H1 (cell line): ENCODE measurements at regions of chr10 and their contacts with region 1.

Region 1: GRCh38 chr10:118459726-118460193 is 117.6 kb upstream of the FAM204A start:
- DNase-seq: peak; percentile 25 to 69
- H3K4me3 ChIP-seq: no peak overlapping the region
- H3K27ac ChIP-seq: no peak overlapping the region
- H3K4me1 ChIP-seq: no peaks in the 10 kb centered on the region
- H3K27me3 ChIP-seq: no peaks in the 10 kb centered on the region
- CTCF ChIP-seq: peak; percentile 51 to 79 (median 78)
- EP300 ChIP-seq: no peak
- POLR2A ChIP-seq: no peak
- RAD21 ChIP-seq: peak; percentile 85 to 90

Region 2: GRCh38 chr10:117496616-117497028 is 963.1 kb before region 1 on chr10:
- CTCF ChIA-PET with region 1: interaction called, 14 read pairs
- POLR2A ChIA-PET with region 1: no interaction called
- DNase-seq: peak; percentile 63 to 93
- H3K4me3 ChIP-seq: no peak overlapping the region
- H3K27ac ChIP-seq: no peak overlapping the region
- H3K4me1 ChIP-seq: peaks cover 0 to 3% (median 1%) of the 10 kb centered on the region in 4 experiments; a peak in 2 of 7 replicates
- H3K27me3 ChIP-seq: peaks cover 0 to 6% (median under 1%) of the 10 kb centered on the region in 4 experiments; a peak in 2 of 7 replicates
- CTCF ChIP-seq: peak; percentile 90 to 95 (median 92)
- EP300 ChIP-seq: peak in 1 of 2 experiments; percentile 41; a peak in 1 of 3 replicates
- POLR2A ChIP-seq: no peak
- RAD21 ChIP-seq: peak; percentile 99

Region 3: GRCh38 chr10:118439824-118440223 is 19.9 kb before region 1 on chr10:
- CTCF ChIA-PET with region 1: interaction called, 24 read pairs
- POLR2A ChIA-PET with region 1: no interaction called
- DNase-seq: no peak
- H3K4me3 ChIP-seq: no peak overlapping the region
- H3K27ac ChIP-seq: no peak overlapping the region
- H3K4me1 ChIP-seq: no peaks in the 10 kb centered on the region
- H3K27me3 ChIP-seq: no peaks in the 10 kb centered on the region
- CTCF ChIP-seq: no peak
- EP300 ChIP-seq: no peak
- POLR2A ChIP-seq: no peak
- RAD21 ChIP-seq: no peak

Region 4: GRCh38 chr10:118447478-118448270 is 12.1 kb before region 1 on chr10:
- CTCF ChIA-PET with region 1: interaction called, 26 read pairs
- POLR2A ChIA-PET with region 1: no interaction called
- DNase-seq: no peak
- H3K4me3 ChIP-seq: no peak overlapping the region
- H3K27ac ChIP-seq: no peak overlapping the region
- H3K4me1 ChIP-seq: no peaks in the 10 kb centered on the region
- H3K27me3 ChIP-seq: no peaks in the 10 kb centered on the region; a peak in 1 of 7 replicates
- CTCF ChIP-seq: no peak
- EP300 ChIP-seq: no peak
- POLR2A ChIP-seq: no peak
- RAD21 ChIP-seq: no peak

Region 5: DNA sequence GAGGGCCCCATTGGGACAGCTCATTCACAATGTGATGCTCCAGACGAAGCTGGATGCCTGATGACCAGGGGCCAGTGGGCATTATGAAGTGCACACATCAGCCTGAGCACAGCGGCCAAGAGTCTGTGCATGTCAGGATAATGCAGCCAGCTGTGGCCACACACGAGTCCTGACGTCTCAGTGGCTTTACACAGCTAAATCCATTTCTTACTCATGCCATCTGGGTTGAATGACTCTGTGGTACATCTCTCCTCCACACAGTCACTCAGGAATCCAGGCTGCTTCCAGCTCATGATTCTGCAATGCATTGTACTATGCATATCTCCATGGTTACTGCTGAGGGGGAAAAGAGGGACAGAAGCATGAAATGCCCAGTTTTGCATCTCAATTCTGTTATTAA is 12.1 kb after region 1 on chr10:
- CTCF ChIA-PET with region 1: interaction called, 73 read pairs
- POLR2A ChIA-PET with region 1: no interaction called
- DNase-seq: no peak
- H3K4me3 ChIP-seq: no peak overlapping the region
- H3K27ac ChIP-seq: no peak overlapping the region
- H3K4me1 ChIP-seq: peaks cover 0 to 3% (median 0%) of the 10 kb centered on the region in 4 experiments; a peak in 1 of 7 replicates
- H3K27me3 ChIP-seq: no peaks in the 10 kb centered on the region
- CTCF ChIP-seq: no peak
- EP300 ChIP-seq: no peak
- POLR2A ChIP-seq: no peak
- RAD21 ChIP-seq: no peak

Region 6: DNA sequence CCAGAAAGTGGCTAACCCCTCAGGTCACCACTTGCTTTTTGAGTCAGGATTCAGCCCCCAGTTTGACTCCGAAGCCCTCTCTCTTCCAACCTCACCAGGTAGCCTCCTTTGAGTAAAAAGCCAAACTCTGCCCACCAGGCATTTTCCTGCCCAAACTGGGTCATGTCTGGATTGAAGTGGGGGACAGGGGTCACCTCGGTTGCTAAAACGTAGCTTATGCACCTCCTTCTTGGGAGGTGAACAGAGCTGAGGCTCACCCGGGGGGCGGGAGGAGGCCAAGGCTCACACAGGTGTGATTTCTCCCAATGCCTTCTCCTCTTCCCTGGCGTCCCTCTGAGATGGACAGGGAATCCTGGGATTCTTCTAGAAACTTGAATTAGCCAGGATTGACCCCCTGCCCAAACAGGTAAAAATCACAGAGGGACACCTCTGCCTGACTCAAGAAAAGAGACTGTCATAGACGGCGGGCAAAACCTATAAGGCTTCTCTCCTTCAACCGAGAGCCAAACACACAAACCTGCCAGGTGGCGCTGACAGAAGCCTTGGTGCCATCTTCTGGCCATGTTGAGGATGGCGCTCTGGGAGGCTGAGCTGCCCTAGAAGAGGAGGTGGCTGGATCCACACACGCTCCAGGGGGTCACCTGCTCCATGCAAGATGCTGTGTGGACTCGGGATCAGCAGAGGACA is 84.1 kb after region 1 on chr10:
- CTCF ChIA-PET with region 1: interaction called, 38 read pairs
- POLR2A ChIA-PET with region 1: no interaction called
- DNase-seq: peak in 1 of 2 experiments; percentile 82
- H3K4me3 ChIP-seq: no peak overlapping the region
- H3K27ac ChIP-seq: no peak overlapping the region
- H3K4me1 ChIP-seq: no peaks in the 10 kb centered on the region
- H3K27me3 ChIP-seq: no peaks in the 10 kb centered on the region
- CTCF ChIP-seq: peak; percentile 89 to 95 (median 91)
- EP300 ChIP-seq: no peak
- POLR2A ChIP-seq: no peak
- RAD21 ChIP-seq: peak; percentile 80 to 88